WTC11 (cell line): ENCODE measurements at regions of chr6 and their contacts with region 1.

Region 1: GRCh38 chr6:33430991-33431879 is 11.4 kb downstream of the SYNGAP1 start:
- DNase-seq: peak; percentile 93
- ATAC-seq: peak; percentile 65
- H3K4me3 Mint-ChIP-seq: peak overlapping the region; percentile 71
- H3K27ac Mint-ChIP-seq: peak overlapping the region; percentile 95
- H3K4me1 Mint-ChIP-seq: peaks cover 61% of the 10 kb centered on the region
- H3K27me3 Mint-ChIP-seq: no peaks in the 10 kb centered on the region
- CTCF ChIP-seq: no peak

Region 2: DNA sequence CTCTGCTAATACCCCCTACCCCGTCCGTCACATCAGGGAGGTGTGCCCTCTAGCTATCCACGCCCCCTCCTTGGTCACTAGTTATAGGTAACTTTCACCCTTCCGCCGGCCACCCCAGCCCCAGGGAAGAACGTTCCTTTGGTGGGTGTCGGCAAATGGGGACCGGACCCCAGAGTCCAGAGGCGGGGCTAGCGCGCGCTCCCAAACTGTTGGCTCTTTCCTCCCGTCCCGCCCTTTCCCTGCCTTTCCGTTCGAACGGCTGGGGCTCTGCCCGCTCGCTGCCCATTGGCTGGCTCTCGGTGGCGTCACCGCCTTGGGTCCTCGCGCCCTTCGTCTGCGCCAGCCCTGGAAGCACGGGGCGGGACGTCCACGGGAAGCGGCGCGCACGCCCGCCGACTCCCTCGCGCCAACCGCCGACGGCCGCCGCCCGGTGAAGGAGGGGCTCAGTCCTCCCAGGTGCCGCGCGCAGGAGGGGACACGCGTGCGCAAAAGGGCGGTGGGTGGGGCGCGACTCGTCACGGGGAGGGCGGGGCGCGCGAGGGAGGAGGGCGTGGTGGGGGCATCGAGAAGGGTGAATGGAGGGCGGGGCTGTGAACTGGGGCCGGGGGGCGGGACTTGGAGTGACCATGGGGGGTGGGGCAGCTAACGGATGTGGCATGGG is 21.1 kb before region 1 on chr6:
- CTCF ChIA-PET with region 1: interaction called, 17 read pairs
- POLR2A ChIA-PET with region 1: interaction called, 10 read pairs
- DNase-seq: peak; percentile 98
- ATAC-seq: peak; percentile 91
- H3K4me3 Mint-ChIP-seq: peak overlapping the region; percentile 83
- H3K27ac Mint-ChIP-seq: peak overlapping the region; percentile 98
- H3K4me1 Mint-ChIP-seq: peaks cover 21% of the 10 kb centered on the region
- H3K27me3 Mint-ChIP-seq: no peaks in the 10 kb centered on the region
- CTCF ChIP-seq: no peak

Region 3: GRCh38 chr6:33417903-33418689 is 13.1 kb before region 1 on chr6 and contains the start of gene CUTA:
- CTCF ChIA-PET with region 1: interaction called, 30 read pairs
- POLR2A ChIA-PET with region 1: interaction called, 8 read pairs
- DNase-seq: peak; percentile 98
- ATAC-seq: peak; percentile 91
- H3K4me3 Mint-ChIP-seq: peak within 1 kb of the TSS; percentile 96
- H3K27ac Mint-ChIP-seq: peak within 1 kb of the TSS; percentile 100
- H3K4me1 Mint-ChIP-seq: peaks cover 63% of the 10 kb centered on the region
- H3K27me3 Mint-ChIP-seq: no peaks in the 10 kb centered on the region; the same call in 1 of the 2 replicates
- CTCF ChIP-seq: peak; percentile 45
- total RNA-seq, gene CUTA: 229 to 247 TPM (median 243 TPM) in 3 replicates

Region 4: GRCh38 chr6:33454009-33454946 is 23.0 kb after region 1 on chr6 and contains the start of gene ZBTB9:
- CTCF ChIA-PET with region 1: interaction called, 9 read pairs
- POLR2A ChIA-PET with region 1: interaction called, 26 read pairs
- DNase-seq: peak; percentile 93
- ATAC-seq: peak; percentile 97
- H3K4me3 Mint-ChIP-seq: peak within 1 kb of the TSS; percentile 92
- H3K27ac Mint-ChIP-seq: peak within 1 kb of the TSS; percentile 77
- H3K4me1 Mint-ChIP-seq: peaks cover 17% of the 10 kb centered on the region
- H3K27me3 Mint-ChIP-seq: peaks cover 4% of the 10 kb centered on the region
- CTCF ChIP-seq: no peak
- total RNA-seq, gene ZBTB9: 19.4 to 21.2 TPM (median 20.8 TPM) in 3 replicates

Region 5: DNA sequence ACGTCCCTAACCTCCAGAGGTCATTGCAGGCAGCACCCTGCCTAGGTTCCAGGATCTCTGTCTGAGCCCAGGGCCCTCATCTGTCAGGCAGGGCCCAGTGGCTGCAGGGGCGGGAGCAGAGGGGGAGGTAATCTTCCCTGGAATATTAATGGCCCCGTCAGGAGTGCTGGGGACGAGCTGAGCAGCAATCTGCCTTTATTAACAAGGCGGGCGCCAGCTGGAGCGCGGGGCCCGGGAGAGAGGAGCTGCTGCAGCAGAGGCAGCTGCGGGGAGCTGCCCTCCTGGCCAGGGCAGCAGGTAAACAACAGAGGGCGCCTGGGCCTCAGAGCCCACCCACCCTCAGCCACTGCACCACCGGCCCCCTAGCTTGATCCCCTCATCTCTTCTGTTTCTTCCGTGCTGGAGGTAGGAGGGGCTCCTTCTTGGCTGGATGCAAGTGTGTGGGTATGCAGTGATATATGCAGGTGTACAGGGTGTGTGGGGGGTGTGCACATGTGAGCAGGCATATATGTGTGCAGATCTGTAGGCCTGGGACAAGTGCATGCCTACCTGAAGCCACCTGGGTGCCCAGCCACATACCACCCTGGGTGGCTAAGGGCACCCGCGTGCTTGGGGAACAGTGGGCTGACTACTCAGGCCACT is 504.3 kb after region 1 on chr6:
- CTCF ChIA-PET with region 1: no interaction called
- POLR2A ChIA-PET with region 1: no interaction called
- DNase-seq: no peak
- ATAC-seq: peak; percentile 55
- H3K4me3 Mint-ChIP-seq: no peak overlapping the region
- H3K27ac Mint-ChIP-seq: no peak overlapping the region
- H3K4me1 Mint-ChIP-seq: peaks cover 12% of the 10 kb centered on the region; the same call in 1 of the 2 replicates
- H3K27me3 Mint-ChIP-seq: 0 out of 2 replicates have a peak, but pooled peaks cover 9% of the 10 kb centered on the region
- CTCF ChIP-seq: no peak